ENCODE measurements at regions of chr2 and their contacts with region 1.

Region 1: GRCh38 chr2:43059183-43059897 is 167.1 kb downstream of the ZFP36L2 start:
- DNase-seq: peak; percentile 82
- H3K4me3 Mint-ChIP-seq: peak overlapping the region; percentile 22
- H3K27ac Mint-ChIP-seq: peak overlapping the region; percentile 76
- H3K4me1 Mint-ChIP-seq: peaks cover 19% of the 10 kb centered on the region
- H3K27me3 Mint-ChIP-seq: no peaks in the 10 kb centered on the region

Region 2: GRCh38 chr2:42961385-42961811 is 97.9 kb before region 1 on chr2:
- CTCF ChIA-PET with region 1: no interaction called
- POLR2A ChIA-PET with region 1: no interaction called
- intact Hi-C with region 1: no loop called
- DNase-seq: no peak
- H3K4me3 Mint-ChIP-seq: no peak overlapping the region
- H3K27ac Mint-ChIP-seq: no peak overlapping the region
- H3K4me1 Mint-ChIP-seq: peaks cover 6% of the 10 kb centered on the region
- H3K27me3 Mint-ChIP-seq: peaks cover 12% of the 10 kb centered on the region

Region 3: GRCh38 chr2:43219383-43220228 is 160.3 kb after region 1 on chr2:
- CTCF ChIA-PET with region 1: interaction called, 3 read pairs
- POLR2A ChIA-PET with region 1: no interaction called
- intact Hi-C with region 1: loop called (anchors 2 kb)
- DNase-seq: peak; percentile 89
- H3K4me3 Mint-ChIP-seq: peak overlapping the region; percentile 88
- H3K27ac Mint-ChIP-seq: peak overlapping the region; percentile 95
- H3K4me1 Mint-ChIP-seq: peaks cover 42% of the 10 kb centered on the region
- H3K27me3 Mint-ChIP-seq: no peaks in the 10 kb centered on the region

Region 4: DNA sequence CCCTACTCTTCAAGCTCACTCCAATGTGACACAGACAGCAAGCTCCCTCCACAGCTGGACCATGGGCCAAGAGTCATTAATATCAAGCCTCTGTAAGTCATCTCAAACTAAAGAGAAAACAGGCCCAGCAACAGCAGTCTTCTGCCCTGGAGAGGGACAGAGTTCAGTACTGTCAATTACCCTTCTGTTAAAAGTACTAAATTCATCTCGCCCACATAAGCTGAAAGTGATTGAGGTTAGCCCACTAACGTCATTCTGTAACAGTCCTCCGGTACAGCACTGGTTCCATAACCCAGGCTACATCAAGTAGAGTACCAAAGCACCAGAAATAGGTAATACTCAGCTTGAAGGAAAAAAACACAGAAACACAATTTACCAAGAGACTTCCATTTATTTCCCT is 510.6 kb after region 1 on chr2:
- CTCF ChIA-PET with region 1: no interaction called
- POLR2A ChIA-PET with region 1: no interaction called
- intact Hi-C with region 1: loop called (anchors 5 kb)
- DNase-seq: peak; percentile 58
- H3K4me3 Mint-ChIP-seq: peak overlapping the region; percentile 58
- H3K27ac Mint-ChIP-seq: peak overlapping the region; percentile 92
- H3K4me1 Mint-ChIP-seq: peaks cover 73% of the 10 kb centered on the region
- H3K27me3 Mint-ChIP-seq: no peaks in the 10 kb centered on the region